T-cell (primary cell): ENCODE measurements at regions of chr6 and their contacts with region 1.

Region 1: GRCh38 chr6:118893807-118894424 is at the start of gene ASF1A:
- DNase-seq: peak; percentile 86 to 97 (median 93)
- ATAC-seq: peak; percentile 78 to 81 (median 79)
- H3K4me3 ChIP-seq: peak within 1 kb of the TSS; percentile 89 to 94
- H3K4me3 Mint-ChIP-seq: peak within 1 kb of the TSS; percentile 91 to 96 (median 94)
- H3K27ac ChIP-seq: peak within 1 kb of the TSS; percentile 91
- H3K27ac Mint-ChIP-seq: peak within 1 kb of the TSS; percentile 99 to 100
- H3K4me1 ChIP-seq: peaks cover 35 to 41% of the 10 kb centered on the region in 2 experiments
- H3K4me1 Mint-ChIP-seq: peaks cover 61 to 65% (median 65%) of the 10 kb centered on the region in 3 donors
- H3K27me3 ChIP-seq: no peaks in the 10 kb centered on the region
- H3K27me3 Mint-ChIP-seq: no peaks in the 10 kb centered on the region
- total RNA-seq, gene ASF1A: 16.8 to 49.6 (median 42.5) TPM

Region 2: GRCh38 chr6:118810420-118811027 is 83.4 kb before region 1 on chr6:
- CTCF ChIA-PET with region 1: interaction called, 4 to 30 read pairs
- POLR2A ChIA-PET with region 1: interaction called in 1 of 2 experiments, 17 read pairs
- DNase-seq: peak; percentile 38 to 85 (median 72)
- ATAC-seq: peak; percentile 97 to 99 (median 98)
- H3K4me3 ChIP-seq: peak overlapping the region in 1 of 2 donors; percentile 8
- H3K4me3 Mint-ChIP-seq: peak overlapping the region; percentile 46 to 59 (median 51)
- H3K27ac ChIP-seq: peak overlapping the region; percentile 91
- H3K27ac Mint-ChIP-seq: peak overlapping the region; percentile 96
- H3K4me1 ChIP-seq: peaks cover 18 to 24% of the 10 kb centered on the region in 2 experiments
- H3K4me1 Mint-ChIP-seq: peaks cover 51 to 69% (median 65%) of the 10 kb centered on the region in 3 donors
- H3K27me3 ChIP-seq: no peaks in the 10 kb centered on the region
- H3K27me3 Mint-ChIP-seq: no peaks in the 10 kb centered on the region

Region 3: GRCh38 chr6:118881440-118882313 is 12.2 kb before region 1 on chr6:
- CTCF ChIA-PET with region 1: interaction called, 11 read pairs
- POLR2A ChIA-PET with region 1: interaction called, 6 to 8 read pairs
- DNase-seq: no peak
- ATAC-seq: peak in 2 of 4 experiments; percentile 41 to 42
- H3K4me3 ChIP-seq: no peak overlapping the region
- H3K4me3 Mint-ChIP-seq: peak overlapping the region; percentile 31 to 49 (median 34)
- H3K27ac ChIP-seq: no peak overlapping the region
- H3K27ac Mint-ChIP-seq: peak overlapping the region; percentile 42 to 66
- H3K4me1 ChIP-seq: peaks cover 3 to 7% of the 10 kb centered on the region in 2 experiments
- H3K4me1 Mint-ChIP-seq: peaks cover 78 to 85% (median 79%) of the 10 kb centered on the region in 3 donors
- H3K27me3 ChIP-seq: no peaks in the 10 kb centered on the region
- H3K27me3 Mint-ChIP-seq: no peaks in the 10 kb centered on the region

Region 4: GRCh38 chr6:118908441-118908840 is 14.5 kb after region 1 on chr6:
- CTCF ChIA-PET with region 1: interaction called, 3 to 10 read pairs
- POLR2A ChIA-PET with region 1: interaction called in 1 of 2 experiments, 6 read pairs
- DNase-seq: no peak
- ATAC-seq: no peak
- H3K4me3 ChIP-seq: no peak overlapping the region
- H3K4me3 Mint-ChIP-seq: no peak overlapping the region
- H3K27ac ChIP-seq: no peak overlapping the region
- H3K27ac Mint-ChIP-seq: no peak overlapping the region
- H3K4me1 ChIP-seq: peaks cover 0 to 5% of the 10 kb centered on the region in 2 experiments
- H3K4me1 Mint-ChIP-seq: peaks cover 13 to 50% (median 46%) of the 10 kb centered on the region in 3 donors
- H3K27me3 ChIP-seq: no peaks in the 10 kb centered on the region
- H3K27me3 Mint-ChIP-seq: no peaks in the 10 kb centered on the region

Region 5: GRCh38 chr6:120173250-120173649 is 1279.3 kb after region 1 on chr6:
- CTCF ChIA-PET with region 1: no interaction called
- POLR2A ChIA-PET with region 1: no interaction called
- DNase-seq: no peak
- ATAC-seq: no peak
- H3K4me3 ChIP-seq: no peak overlapping the region
- H3K4me3 Mint-ChIP-seq: no peak overlapping the region
- H3K27ac ChIP-seq: no peak overlapping the region
- H3K27ac Mint-ChIP-seq: no peak overlapping the region
- H3K4me1 ChIP-seq: no peaks in the 10 kb centered on the region
- H3K4me1 Mint-ChIP-seq: no peaks in the 10 kb centered on the region
- H3K27me3 ChIP-seq: no peaks in the 10 kb centered on the region
- H3K27me3 Mint-ChIP-seq: no peaks in the 10 kb centered on the region